ENCODE measurements at regions of chr5 and their contacts with region 1.

Region 1: DNA sequence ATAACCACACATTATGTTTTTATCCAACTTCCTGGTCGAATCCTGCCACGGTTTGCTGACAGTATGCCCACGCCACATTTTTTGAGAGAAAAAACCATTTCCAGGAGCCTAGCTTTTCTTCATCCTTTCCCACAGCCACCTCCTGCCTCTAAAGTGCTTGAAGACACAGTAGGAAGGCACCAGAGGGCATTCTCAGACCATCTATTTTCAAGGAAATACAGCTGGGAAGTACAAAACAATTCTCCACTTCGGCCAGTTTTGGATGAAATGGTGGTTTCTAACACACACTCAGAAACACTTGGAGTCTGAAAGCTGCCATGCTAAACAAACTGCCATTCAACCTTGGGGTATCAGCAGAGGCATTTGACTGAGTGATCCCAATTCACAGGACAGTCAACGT is 86.3 kb upstream of the RPS23 start:
- DNase-seq: peak; percentile 45
- H3K4me3 ChIP-seq: no peak overlapping the region
- H3K27ac ChIP-seq: peak overlapping the region; percentile 76
- H3K4me1 ChIP-seq: peaks cover 17% of the 10 kb centered on the region
- H3K27me3 ChIP-seq: no peaks in the 10 kb centered on the region
- CTCF ChIP-seq: peak; percentile 31 to 53

Region 2: DNA sequence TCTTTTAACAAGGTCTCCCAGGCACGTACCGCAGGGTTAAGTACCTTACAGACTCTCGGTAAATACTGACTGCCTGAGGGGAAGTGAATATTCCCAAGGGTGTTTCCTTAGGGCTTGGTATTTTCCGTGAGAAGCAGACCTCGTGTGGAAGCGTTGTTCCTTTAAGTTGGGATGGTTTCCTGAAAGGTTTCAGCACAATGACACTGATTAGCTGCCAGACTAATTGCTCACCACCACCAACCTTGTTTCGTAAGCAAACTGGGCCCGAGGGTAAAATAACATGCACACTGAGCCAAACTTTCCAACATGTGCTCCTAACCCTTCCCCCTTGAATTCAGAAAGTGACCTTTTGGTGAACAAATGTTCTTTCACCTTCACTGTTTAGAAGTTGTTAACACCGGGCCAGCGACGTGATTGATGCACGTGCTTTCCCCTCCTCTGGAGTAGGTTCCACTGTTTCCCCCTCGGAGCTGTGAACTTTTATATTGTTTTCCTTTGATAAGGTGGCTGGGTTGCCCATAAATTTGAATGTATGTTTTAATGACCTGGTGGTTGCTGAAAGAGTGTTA is 41.8 kb after region 1 on chr5:
- CTCF ChIA-PET with region 1: no interaction called
- dilution Hi-C with region 1: loop called (anchors 5 kb)
- in situ Hi-C with region 1: no loop called
- intact Hi-C with region 1: loop called (anchors 2 kb)
- DNase-seq: peak; percentile 100
- H3K4me3 ChIP-seq: peak overlapping the region in 2 of 3 experiments; percentile 22 to 45
- H3K27ac ChIP-seq: peak overlapping the region; percentile 100
- H3K4me1 ChIP-seq: peaks cover 25% of the 10 kb centered on the region
- H3K27me3 ChIP-seq: no peaks in the 10 kb centered on the region
- CTCF ChIP-seq: no peak

Region 3: GRCh38 chr5:82421119-82421518 is 56.6 kb after region 1 on chr5:
- CTCF ChIA-PET with region 1: no interaction called
- dilution Hi-C with region 1: no loop called
- in situ Hi-C with region 1: no loop called
- intact Hi-C with region 1: loop called (anchors 1 kb)
- DNase-seq: peak; percentile 94
- H3K4me3 ChIP-seq: no peak overlapping the region
- H3K27ac ChIP-seq: peak overlapping the region; percentile 37
- H3K4me1 ChIP-seq: peaks cover 22% of the 10 kb centered on the region
- H3K27me3 ChIP-seq: no peaks in the 10 kb centered on the region
- CTCF ChIP-seq: peak; percentile 15 to 63

Region 4: GRCh38 chr5:82494942-82495341 is 130.4 kb after region 1 on chr5:
- CTCF ChIA-PET with region 1: interaction called, 7 read pairs
- dilution Hi-C with region 1: no loop called
- in situ Hi-C with region 1: no loop called
- intact Hi-C with region 1: loop called (anchors 1 kb)
- DNase-seq: no peak
- H3K4me3 ChIP-seq: no peak overlapping the region
- H3K27ac ChIP-seq: no peak overlapping the region
- H3K4me1 ChIP-seq: no peaks in the 10 kb centered on the region
- H3K27me3 ChIP-seq: peaks cover 2% of the 10 kb centered on the region
- CTCF ChIP-seq: peak; percentile 25 to 45

Region 5: GRCh38 chr5:83564069-83564749 is 1199.7 kb after region 1 on chr5:
- CTCF ChIA-PET with region 1: no interaction called
- dilution Hi-C with region 1: no loop called
- in situ Hi-C with region 1: loop called (anchors 25 kb)
- intact Hi-C with region 1: loop called (anchors 2 kb)
- DNase-seq: peak; percentile 21
- H3K4me3 ChIP-seq: no peak overlapping the region
- H3K27ac ChIP-seq: no peak overlapping the region
- H3K4me1 ChIP-seq: peaks cover 12% of the 10 kb centered on the region
- H3K27me3 ChIP-seq: no peaks in the 10 kb centered on the region
- CTCF ChIP-seq: peak; percentile 40 to 51